Tibial artery (tissue), 4 donors: ENCODE measurements at regions of chr12 and their contacts with region 1.

Region 1: GRCh38 chr12:22443379-22444316 is 100.7 kb downstream of the C2CD5 start:
- DNase-seq: peak in 1 of 2 donors; percentile 50
- H3K4me3 ChIP-seq: no peak overlapping the region
- H3K27ac ChIP-seq: no peak overlapping the region
- H3K4me1 ChIP-seq: no peaks in the 10 kb centered on the region
- H3K27me3 ChIP-seq: no peaks in the 10 kb centered on the region
- CTCF ChIP-seq: peak; percentile 64 to 69

Region 2: GRCh38 chr12:22083167-22083566 is 360.5 kb before region 1 on chr12:
- intact Hi-C with region 1: loop called (anchors 10 kb)
- DNase-seq: no peak
- H3K4me3 ChIP-seq: no peak overlapping the region
- H3K27ac ChIP-seq: no peak overlapping the region
- H3K4me1 ChIP-seq: no peaks in the 10 kb centered on the region
- H3K27me3 ChIP-seq: no peaks in the 10 kb centered on the region
- CTCF ChIP-seq: peak; percentile 47 to 61